Activated CD8-positive, alpha-beta T cell treated with anti-CD3 and anti-CD28 coated beads for 36 hours (primary cell): ENCODE measurements at regions of chr11 and their contacts with region 1.

Region 1: DNA sequence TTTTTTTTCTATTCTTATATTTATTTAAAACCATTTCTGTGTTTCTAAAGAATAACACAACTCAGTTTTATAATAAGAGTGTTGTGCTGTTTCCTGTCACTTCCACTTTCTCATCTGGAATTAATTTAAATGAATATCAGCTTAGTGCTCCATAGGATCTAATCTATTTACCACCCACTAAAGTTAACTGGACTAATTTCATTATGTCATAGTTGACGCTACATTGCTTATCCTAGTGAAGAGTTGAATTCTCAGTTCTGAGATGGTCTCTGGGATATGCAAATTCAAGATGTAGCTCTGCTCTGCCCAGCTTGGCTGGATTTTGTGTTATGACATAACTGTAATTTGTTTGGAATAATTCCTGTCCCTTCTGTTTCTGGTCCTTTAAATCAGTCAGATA is 380.1 kb downstream of the METTL15 start:
- DNase-seq: no peak
- ATAC-seq: no peak
- H3K4me3 Mint-ChIP-seq: no peak overlapping the region
- H3K27ac Mint-ChIP-seq: no peak overlapping the region
- H3K4me1 Mint-ChIP-seq: no peaks in the 10 kb centered on the region
- H3K27me3 Mint-ChIP-seq: no peaks in the 10 kb centered on the region
- CTCF ChIP-seq: no peak

Region 2: DNA sequence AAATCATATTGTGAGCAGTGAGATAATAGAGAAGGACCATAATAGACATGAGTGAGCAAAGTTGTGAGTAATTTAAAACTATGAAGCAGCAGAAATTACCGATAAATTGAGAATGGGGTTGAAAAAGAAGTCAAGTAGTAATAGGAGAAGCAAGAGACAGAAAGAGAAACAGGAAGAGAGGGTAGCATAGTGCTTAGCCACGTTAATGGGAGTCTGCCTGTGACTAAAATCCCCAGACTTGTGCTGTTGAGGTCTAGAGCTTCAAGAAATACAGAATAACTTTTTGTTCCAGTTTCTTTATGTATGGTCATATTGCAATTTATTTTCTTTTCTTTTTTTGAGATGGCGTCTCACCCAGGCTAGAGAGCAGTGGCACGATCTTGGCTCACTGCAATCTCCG is 11.5 kb before region 1 on chr11:
- CTCF ChIA-PET with region 1: interaction called, 10 read pairs
- POLR2A ChIA-PET with region 1: no interaction called
- intact Hi-C with region 1: no loop called
- DNase-seq: no peak
- ATAC-seq: no peak
- H3K4me3 Mint-ChIP-seq: no peak overlapping the region
- H3K27ac Mint-ChIP-seq: no peak overlapping the region
- H3K4me1 Mint-ChIP-seq: no peaks in the 10 kb centered on the region
- H3K27me3 Mint-ChIP-seq: no peaks in the 10 kb centered on the region
- CTCF ChIP-seq: no peak

Region 3: DNA sequence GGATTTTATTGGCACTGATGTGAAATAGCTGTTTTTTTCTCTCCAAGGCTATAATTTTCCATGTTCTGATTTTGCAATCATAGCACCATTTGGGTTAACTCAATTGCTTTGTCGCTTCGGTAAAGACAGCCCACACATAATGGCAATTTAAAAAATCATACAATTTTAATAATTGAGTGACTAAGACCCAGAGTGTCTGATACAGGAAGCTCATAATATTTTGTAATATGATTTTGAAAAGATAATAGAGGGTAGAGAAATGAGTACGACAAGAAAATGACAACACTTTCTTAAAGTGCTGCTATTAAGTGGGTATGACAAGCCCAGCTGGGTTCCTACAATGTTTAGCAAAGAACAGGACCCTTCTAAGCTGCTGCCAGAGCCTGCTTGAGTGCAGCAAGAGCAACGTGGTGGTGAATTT is 59.0 kb after region 1 on chr11:
- CTCF ChIA-PET with region 1: no interaction called
- POLR2A ChIA-PET with region 1: no interaction called
- intact Hi-C with region 1: no loop called
- DNase-seq: no peak
- ATAC-seq: no peak
- H3K4me3 Mint-ChIP-seq: no peak overlapping the region
- H3K27ac Mint-ChIP-seq: no peak overlapping the region
- H3K4me1 Mint-ChIP-seq: no peaks in the 10 kb centered on the region
- H3K27me3 Mint-ChIP-seq: no peaks in the 10 kb centered on the region
- CTCF ChIP-seq: no peak